Adrenal gland (tissue), 19 donors: ENCODE measurements at regions of chr13 and their contacts with region 1.

Region 1: DNA sequence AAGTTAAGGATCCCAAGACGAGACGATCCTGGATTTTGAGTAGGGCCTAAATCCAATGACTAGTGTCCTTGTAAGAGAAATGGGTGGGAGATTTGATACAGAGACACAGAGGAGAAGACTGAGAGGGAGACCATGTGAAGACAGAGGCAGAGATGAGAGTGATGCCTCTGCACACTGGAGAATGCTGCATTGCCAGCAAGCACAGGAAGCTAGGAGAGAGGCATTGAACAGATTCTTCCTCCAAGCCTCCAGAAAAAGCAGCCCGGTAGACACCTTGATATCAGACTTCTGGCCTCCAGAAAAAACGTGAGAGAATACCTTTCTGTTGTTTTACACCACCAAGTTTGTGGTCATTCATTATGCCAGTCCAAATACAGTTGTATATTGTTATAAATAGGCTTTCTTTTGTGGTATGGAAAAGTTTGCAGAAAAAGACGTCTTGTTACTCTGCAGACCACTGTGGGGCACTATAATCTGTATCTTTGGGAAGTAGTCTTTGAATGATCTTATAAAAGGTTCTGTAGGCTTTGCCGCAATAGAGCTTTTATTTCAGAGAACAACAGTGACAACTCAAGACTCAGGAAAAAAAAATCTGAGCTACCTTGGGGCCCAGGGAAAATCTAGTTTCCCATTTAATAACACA is 17.9 kb upstream of the RFC3 start:
- DNase-seq: peak in 1 of 7 donors; percentile 14
- H3K4me3 ChIP-seq: peak overlapping the region in 1 of 4 donors; percentile 23
- H3K27ac ChIP-seq: peak overlapping the region in 1 of 5 donors; percentile 5
- H3K4me1 ChIP-seq: peaks cover 0 to 16% of the 10 kb centered on the region in 2 donors
- H3K27me3 ChIP-seq: no peaks in the 10 kb centered on the region
- CTCF ChIP-seq: peak; percentile 22 to 61 (median 53)
- POLR2A ChIP-seq: no peak

Region 2: GRCh38 chr13:32976047-32976805 is 823.8 kb before region 1 on chr13:
- intact Hi-C with region 1: no loop called
- DNase-seq: no peak
- H3K4me3 ChIP-seq: no peak overlapping the region
- H3K27ac ChIP-seq: no peak overlapping the region
- H3K4me1 ChIP-seq: no peaks in the 10 kb centered on the region
- H3K27me3 ChIP-seq: no peaks in the 10 kb centered on the region
- CTCF ChIP-seq: no peak
- POLR2A ChIP-seq: no peak

Region 3: DNA sequence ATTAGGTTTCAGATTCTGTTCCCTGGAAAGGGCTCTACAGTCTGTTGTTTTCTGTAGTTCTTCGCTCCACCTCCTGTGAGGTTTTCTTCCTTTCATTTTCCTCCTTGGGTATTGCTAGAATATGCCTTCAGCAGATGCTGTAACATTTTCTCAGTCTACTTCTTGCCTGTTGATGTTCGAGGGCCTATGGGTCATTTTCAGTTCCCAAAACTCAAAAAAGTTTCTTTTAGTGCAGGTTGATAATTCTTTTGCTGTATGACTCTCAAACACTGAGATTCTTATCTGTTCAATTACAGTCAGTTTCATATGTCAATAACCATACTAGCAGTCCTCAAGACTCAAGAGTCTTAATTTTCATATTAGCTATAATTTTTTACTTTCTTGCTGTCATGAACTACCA is 286.2 kb after region 1 on chr13:
- intact Hi-C with region 1: loop called in 1 of 2 experiments (anchors 10 kb)
- DNase-seq: no peak
- H3K4me3 ChIP-seq: no peak overlapping the region
- H3K27ac ChIP-seq: no peak overlapping the region
- H3K4me1 ChIP-seq: no peaks in the 10 kb centered on the region
- H3K27me3 ChIP-seq: no peaks in the 10 kb centered on the region
- CTCF ChIP-seq: no peak
- POLR2A ChIP-seq: no peak